Prostate gland (tissue), 2 donors: ENCODE measurements at regions of chr6 and their contacts with region 1.

Region 1: GRCh38 chr6:50816115-50816675 is 2.5 kb upstream of the TFAP2B start:
- DNase-seq: peak; percentile 68
- H3K4me3 ChIP-seq: peak overlapping the region; percentile 28 to 30
- H3K27ac ChIP-seq: no peak overlapping the region
- H3K4me1 ChIP-seq: no peaks in the 10 kb centered on the region
- H3K27me3 ChIP-seq: peaks cover 31% of the 10 kb centered on the region
- CTCF ChIP-seq: peak; percentile 78 to 95 (median 82)
- POLR2A ChIP-seq: no peak

Region 2: DNA sequence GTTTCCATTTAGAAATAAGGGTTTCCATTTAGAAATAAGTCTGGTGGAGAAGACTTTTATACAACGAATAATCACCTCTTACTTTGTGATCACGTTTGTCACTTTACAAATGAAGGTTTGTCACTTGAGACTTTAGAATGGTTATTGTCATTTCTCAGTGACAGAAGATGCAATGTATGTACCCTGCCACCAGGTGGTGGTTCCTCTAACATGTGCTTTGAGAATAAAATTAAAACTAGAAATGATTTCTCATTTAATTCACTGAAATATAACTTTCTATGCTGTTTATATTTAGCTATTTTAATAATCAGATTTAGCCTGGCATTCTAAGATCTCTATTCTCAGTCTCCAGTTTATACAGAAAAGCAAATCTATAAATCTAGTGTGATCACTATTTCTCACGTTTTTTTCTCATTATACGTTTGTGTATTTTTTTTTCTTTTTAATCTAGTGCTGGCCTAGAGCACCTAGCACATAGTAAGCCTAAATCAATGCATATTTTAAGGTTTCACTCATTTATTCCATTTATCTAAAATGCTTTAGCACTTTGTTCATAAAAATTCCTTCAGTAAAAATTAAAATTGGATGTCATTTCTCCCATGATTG is 160.2 kb before region 1 on chr6:
- intact Hi-C with region 1: no loop called
- DNase-seq: no peak
- H3K4me3 ChIP-seq: no peak overlapping the region
- H3K27ac ChIP-seq: no peak overlapping the region
- H3K4me1 ChIP-seq: no peaks in the 10 kb centered on the region
- H3K27me3 ChIP-seq: no peaks in the 10 kb centered on the region
- CTCF ChIP-seq: peak in 3 of 4 experiments; percentile 23 to 43 (median 29)
- POLR2A ChIP-seq: no peak

Region 3: DNA sequence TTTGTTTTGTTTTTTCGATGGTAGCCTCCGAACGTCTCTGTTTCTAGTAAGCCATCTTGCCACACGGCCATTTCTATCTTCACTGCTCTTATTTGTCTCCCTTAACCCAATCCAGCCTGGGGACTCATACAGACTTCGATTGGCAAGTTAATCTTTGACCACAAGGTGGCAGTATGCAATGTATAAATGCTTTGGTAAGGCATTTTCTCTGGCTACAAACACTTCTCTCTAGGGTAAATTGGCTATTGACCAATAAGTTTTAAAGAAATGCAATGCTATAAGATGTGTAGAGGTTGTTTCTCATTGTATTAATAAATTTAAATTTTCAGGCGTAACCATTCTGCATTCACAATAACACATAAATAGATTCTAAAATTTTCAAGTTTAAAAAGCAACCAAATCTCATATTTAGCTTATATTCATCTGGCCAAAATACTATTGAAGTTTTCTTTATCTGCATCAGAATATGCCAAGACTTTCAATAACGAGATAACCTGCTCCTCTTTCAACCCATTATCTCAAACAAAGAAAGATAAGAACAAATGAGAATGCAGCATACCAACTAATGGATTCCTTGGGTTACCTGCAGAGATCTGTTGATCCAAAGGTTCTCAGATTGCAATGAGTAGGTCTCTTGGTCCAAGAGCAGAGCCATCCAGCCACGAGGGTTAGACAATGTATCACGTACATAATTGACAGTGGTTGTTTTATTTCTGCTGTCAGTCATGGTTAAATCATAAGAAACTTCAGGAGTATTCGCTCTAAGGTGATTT is 1039.3 kb after region 1 on chr6:
- intact Hi-C with region 1: loop called (anchors 10 kb)
- DNase-seq: peak; percentile 36
- H3K4me3 ChIP-seq: no peak overlapping the region
- H3K27ac ChIP-seq: no peak overlapping the region
- H3K4me1 ChIP-seq: no peaks in the 10 kb centered on the region
- H3K27me3 ChIP-seq: no peaks in the 10 kb centered on the region
- CTCF ChIP-seq: peak; percentile 39 to 71 (median 60)
- POLR2A ChIP-seq: no peak

Region 4: GRCh38 chr6:52020945-52021570 is 1204.9 kb after region 1 on chr6:
- intact Hi-C with region 1: loop called (anchors 5 kb)
- DNase-seq: no peak
- H3K4me3 ChIP-seq: no peak overlapping the region
- H3K27ac ChIP-seq: no peak overlapping the region
- H3K4me1 ChIP-seq: no peaks in the 10 kb centered on the region
- H3K27me3 ChIP-seq: no peaks in the 10 kb centered on the region
- CTCF ChIP-seq: peak; percentile 75 to 89 (median 84)
- POLR2A ChIP-seq: no peak

Region 5: GRCh38 chr6:52049252-52050050 is 1233.3 kb after region 1 on chr6:
- intact Hi-C with region 1: loop called (anchors 2 kb)
- DNase-seq: no peak
- H3K4me3 ChIP-seq: no peak overlapping the region
- H3K27ac ChIP-seq: no peak overlapping the region
- H3K4me1 ChIP-seq: no peaks in the 10 kb centered on the region
- H3K27me3 ChIP-seq: no peaks in the 10 kb centered on the region
- CTCF ChIP-seq: peak in 3 of 4 experiments; percentile 52 to 72 (median 68)
- POLR2A ChIP-seq: no peak